Left cardiac atrium (tissue), 4 donors: ENCODE measurements at regions of chr2 and their contacts with region 1.

Region 1: GRCh38 chr2:25664183-25664964 is 9.0 kb downstream of the DTNB start:
- DNase-seq: peak; percentile 59
- ATAC-seq: peak; percentile 84 to 90

Region 2: GRCh38 chr2:25041928-25042320 is 622.5 kb before region 1 on chr2 and contains the start of gene EFR3B:
- intact Hi-C with region 1: no loop called
- DNase-seq: peak; percentile 97
- ATAC-seq: peak; percentile 99
- total RNA-seq, gene EFR3B: 7.5 to 8.7 TPM

Region 3: GRCh38 chr2:25098670-25099486 is 565.5 kb before region 1 on chr2:
- intact Hi-C with region 1: no loop called
- DNase-seq: peak; percentile 63
- ATAC-seq: peak; percentile 84 to 91

Region 4: DNA sequence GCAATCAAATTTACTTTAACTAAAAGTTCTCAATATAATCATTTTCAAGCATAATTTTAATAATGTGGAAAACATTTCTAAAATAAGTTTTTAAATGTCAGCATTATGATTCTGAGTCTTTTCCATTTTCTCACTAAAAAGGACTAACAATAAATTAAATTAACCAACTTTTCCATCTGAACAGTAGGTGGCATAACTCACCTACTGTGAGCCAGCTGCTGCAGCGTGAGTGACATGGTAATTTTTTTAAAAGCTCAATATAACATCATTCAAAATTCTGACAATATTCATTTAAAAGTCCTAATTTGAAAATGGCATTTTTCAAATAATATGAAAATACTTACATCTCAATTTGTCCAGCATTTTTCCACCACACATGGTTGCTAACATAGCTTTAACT is 57.5 kb before region 1 on chr2:
- intact Hi-C with region 1: loop called (anchors 1 to 10 kb)
- DNase-seq: no peak
- ATAC-seq: no peak